ENCODE measurements at regions of chr16 and their contacts with region 1.

Region 1: GRCh38 chr16:71746442-71747046 is 22.0 kb upstream of the PHLPP2 start:
- DNase-seq: peak; percentile 61
- H3K4me3 ChIP-seq: no peak overlapping the region
- H3K27ac ChIP-seq: no peak overlapping the region
- H3K4me1 ChIP-seq: no peaks in the 10 kb centered on the region
- H3K27me3 ChIP-seq: no peaks in the 10 kb centered on the region
- CTCF ChIP-seq: peak; percentile 86

Region 2: DNA sequence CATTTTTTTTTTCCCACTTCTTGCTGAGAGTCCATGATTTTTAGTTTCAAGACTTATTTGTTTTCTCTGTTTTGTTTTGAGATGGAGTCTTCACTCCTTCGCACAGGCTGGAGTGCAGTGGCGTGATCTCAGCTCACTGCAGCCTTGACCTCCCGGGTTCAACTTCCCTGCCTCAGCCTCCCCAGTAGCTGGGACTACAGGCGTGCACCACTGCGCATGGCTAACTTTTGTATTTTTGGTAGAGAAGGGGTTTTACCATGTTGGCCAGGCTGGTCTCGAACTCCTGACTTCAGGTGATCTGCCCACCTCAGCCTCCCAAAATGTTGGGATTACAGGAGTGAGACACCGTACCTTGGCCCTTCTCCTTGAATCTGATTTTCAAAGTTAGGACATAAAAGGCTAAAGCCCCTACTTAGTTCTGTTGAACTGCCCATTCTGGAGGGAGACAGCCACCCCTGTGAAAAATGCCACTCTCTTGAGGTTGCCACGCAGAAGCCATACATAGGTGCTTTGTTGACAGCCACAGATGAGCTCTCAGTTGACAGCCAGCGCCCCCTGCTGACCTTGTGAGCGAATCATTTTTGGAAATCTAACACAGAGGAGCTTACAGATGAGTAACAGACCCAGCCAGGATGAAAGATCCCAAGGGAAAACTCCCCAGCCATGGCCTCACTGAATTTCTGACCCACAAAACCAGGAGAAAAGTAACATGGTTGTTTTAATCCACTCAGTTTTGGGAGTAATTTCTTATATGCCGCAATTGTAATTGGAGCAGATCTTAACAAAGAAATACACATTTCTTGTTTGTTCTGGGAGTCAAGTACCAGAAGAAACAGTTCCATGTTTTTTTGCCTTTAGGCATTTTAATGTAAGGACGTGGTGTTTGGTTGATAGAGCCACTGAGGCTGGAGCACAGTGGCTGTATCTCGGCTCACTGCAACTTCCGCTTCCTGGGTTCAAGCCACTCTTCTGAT is 214.8 kb after region 1 on chr16:
- CTCF ChIA-PET with region 1: no interaction called
- POLR2A ChIA-PET with region 1: no interaction called
- intact Hi-C with region 1: loop called (anchors 5 kb)
- DNase-seq: peak; percentile 92
- H3K4me3 ChIP-seq: no peak overlapping the region
- H3K27ac ChIP-seq: no peak overlapping the region
- H3K4me1 ChIP-seq: peaks cover 7% of the 10 kb centered on the region
- H3K27me3 ChIP-seq: no peaks in the 10 kb centered on the region
- CTCF ChIP-seq: peak; percentile 86

Measured in A673 (cell line).